ENCODE measurements at regions of chr17 and their contacts with region 1.

Region 1: GRCh38 chr17:28644985-28645939 is at the start of gene BLTP2:
- DNase-seq: peak; percentile 97 to 99
- ATAC-seq: peak; percentile 94 to 97
- H3K4me3 ChIP-seq: peak within 1 kb of the TSS; percentile 94
- H3K27ac ChIP-seq: peak within 1 kb of the TSS; percentile 97 to 99
- H3K4me1 ChIP-seq: peaks cover 32% of the 10 kb centered on the region
- CTCF ChIP-seq: no peak
- EP300 ChIP-seq: no peak
- POLR2A ChIP-seq: peak; percentile 82
- RAD21 ChIP-seq: no peak
- polyA plus RNA-seq, gene BLTP2: 150 and 243 TPM in 2 replicates

Region 2: DNA sequence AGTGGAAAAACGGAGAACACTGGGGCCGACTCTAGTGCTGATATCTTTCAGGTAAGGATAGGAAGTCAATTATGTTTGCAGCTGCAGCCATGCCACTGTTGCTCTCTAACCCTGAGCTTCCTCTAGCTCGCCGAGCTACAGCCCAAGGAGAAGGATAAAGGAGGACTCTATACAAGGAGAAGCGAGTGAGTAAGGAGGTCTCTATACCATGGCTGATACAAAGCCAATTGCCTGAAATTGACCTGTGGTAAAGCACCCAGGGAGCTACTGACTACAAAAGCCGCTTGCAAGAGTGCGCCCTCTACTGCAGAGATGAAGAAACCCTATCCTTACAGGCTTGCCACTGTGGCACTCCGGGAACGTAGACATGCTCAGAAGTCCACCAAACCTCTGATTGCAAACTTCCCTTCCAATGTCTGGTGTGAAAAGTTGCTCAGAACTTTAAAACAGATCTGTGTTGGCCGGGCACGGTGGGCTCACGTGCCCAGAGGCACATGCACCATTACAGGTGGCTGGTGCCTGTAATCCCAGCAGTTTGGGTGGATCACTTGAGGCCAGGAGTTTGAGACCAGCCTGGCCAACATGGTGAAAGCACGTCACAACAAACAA is 228.5 kb before region 1 on chr17:
- CTCF ChIA-PET with region 1: no interaction called
- POLR2A ChIA-PET with region 1: no interaction called
- DNase-seq: peak; percentile 73 to 80
- ATAC-seq: peak; percentile 92 to 99
- H3K4me3 ChIP-seq: no peak overlapping the region
- H3K27ac ChIP-seq: no peak overlapping the region
- H3K4me1 ChIP-seq: no peaks in the 10 kb centered on the region
- CTCF ChIP-seq: peak; percentile 84
- EP300 ChIP-seq: no peak
- POLR2A ChIP-seq: no peak
- RAD21 ChIP-seq: peak; percentile 68

Region 3: GRCh38 chr17:28612936-28613872 is 32.1 kb before region 1 on chr17:
- CTCF ChIA-PET with region 1: interaction called, 12 read pairs
- POLR2A ChIA-PET with region 1: interaction called, 7 read pairs
- DNase-seq: peak; percentile 39 to 56
- ATAC-seq: peak; percentile 56 to 79; a peak in 3 of 6 replicates
- H3K4me3 ChIP-seq: no peak overlapping the region
- H3K27ac ChIP-seq: no peak overlapping the region
- H3K4me1 ChIP-seq: no peaks in the 10 kb centered on the region
- CTCF ChIP-seq: peak; percentile 67
- EP300 ChIP-seq: no peak
- POLR2A ChIP-seq: no peak
- RAD21 ChIP-seq: peak; percentile 47 to 58; a peak in 4 of 5 replicates

Region 4: GRCh38 chr17:28661635-28662537 is 16.6 kb after region 1 on chr17 and contains the starts of genes SDF2 and SUPT6H:
- CTCF ChIA-PET with region 1: interaction called, 81 read pairs
- POLR2A ChIA-PET with region 1: interaction called, 41 read pairs
- DNase-seq: peak; percentile 92 to 97
- ATAC-seq: peak; percentile 92 to 97
- H3K4me3 ChIP-seq: peak within 1 kb of the TSS; percentile 74
- H3K27ac ChIP-seq: peak within 1 kb of the TSS; percentile 94 to 96
- H3K4me1 ChIP-seq: peaks cover 31% of the 10 kb centered on the region
- CTCF ChIP-seq: no peak
- EP300 ChIP-seq: no peak
- POLR2A ChIP-seq: peak; percentile 90
- RAD21 ChIP-seq: no peak
- polyA plus RNA-seq, gene SDF2: 87.9 and 113 TPM in 2 replicates
- polyA plus RNA-seq, gene SUPT6H: 51.4 and 61.0 TPM in 2 replicates

Region 5: GRCh38 chr17:28675980-28676379 is 30.7 kb after region 1 on chr17:
- CTCF ChIA-PET with region 1: interaction called, 29 read pairs
- POLR2A ChIA-PET with region 1: interaction called, 4 read pairs
- DNase-seq: peak; percentile 42 to 62
- ATAC-seq: peak; percentile 81 to 82; a peak in 5 of 6 replicates
- H3K4me3 ChIP-seq: no peak overlapping the region
- H3K27ac ChIP-seq: no peak overlapping the region
- H3K4me1 ChIP-seq: no peaks in the 10 kb centered on the region
- CTCF ChIP-seq: peak; percentile 45
- EP300 ChIP-seq: no peak
- POLR2A ChIP-seq: no peak
- RAD21 ChIP-seq: peak; percentile 44 to 66; a peak in 4 of 5 replicates

Region 6: DNA sequence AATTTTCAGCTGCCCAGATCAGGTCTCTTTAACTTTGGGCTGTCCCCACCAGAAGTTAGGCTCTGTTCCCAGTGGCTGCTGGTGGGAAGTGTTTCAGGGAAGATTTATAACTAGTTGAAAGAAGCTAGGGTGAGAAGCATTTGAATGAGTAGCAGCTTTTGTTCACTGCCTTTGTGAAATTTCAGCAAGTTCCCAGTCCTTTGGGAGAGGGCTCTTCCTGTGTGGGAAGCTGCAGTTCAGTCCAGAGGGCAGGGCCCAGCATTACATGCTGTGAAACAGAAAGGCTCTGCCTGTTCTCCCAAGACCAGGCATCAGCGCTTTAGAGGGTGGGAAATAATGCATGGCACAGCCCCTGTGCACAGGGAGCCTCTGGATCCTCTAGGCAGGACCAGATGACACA is 48.6 kb after region 1 on chr17:
- CTCF ChIA-PET with region 1: interaction called, 32 read pairs
- POLR2A ChIA-PET with region 1: no interaction called
- DNase-seq: no peak
- ATAC-seq: no peak
- H3K4me3 ChIP-seq: no peak overlapping the region
- H3K27ac ChIP-seq: no peak overlapping the region
- H3K4me1 ChIP-seq: peaks cover 27% of the 10 kb centered on the region
- CTCF ChIP-seq: no peak
- EP300 ChIP-seq: no peak
- POLR2A ChIP-seq: no peak
- RAD21 ChIP-seq: no peak

Region 7: DNA sequence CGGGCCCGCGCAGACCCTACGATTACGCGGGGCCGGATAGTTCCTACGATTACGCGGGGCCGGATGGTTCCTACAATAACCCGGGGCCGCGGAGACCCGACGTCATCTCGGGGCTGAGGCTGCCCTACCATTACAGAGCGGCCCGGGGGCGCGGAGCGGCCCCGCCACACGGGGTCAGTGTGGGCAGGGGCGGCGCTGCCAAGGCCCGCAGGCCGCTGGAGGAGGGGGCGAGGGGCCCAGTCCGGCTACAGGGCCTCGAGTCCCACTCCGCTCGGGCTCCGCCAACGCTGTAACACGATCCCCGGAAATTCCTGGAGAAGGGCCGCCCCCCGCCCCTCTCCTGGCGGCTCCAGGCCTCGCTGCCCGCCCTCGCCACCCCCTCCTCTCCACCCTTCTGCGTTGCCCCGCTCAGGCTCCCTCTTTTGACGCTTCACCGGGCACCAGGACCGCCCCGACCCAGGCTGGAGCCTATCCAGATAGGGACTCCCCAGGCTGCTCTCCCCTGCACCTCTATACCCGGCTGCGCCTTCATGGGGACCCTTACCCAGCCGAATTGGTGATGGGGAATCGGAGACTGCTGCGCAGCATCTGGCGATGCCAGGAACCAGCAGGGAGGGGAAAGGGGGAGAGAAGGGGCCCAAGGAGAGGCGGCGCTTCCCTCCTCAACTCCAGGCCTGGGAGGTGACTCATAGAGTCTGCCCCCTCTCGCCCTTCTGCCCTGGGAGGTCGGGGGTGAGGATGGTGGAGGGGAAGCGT is 72.5 kb after region 1 on chr17 and contains the start of gene RAB34:
- CTCF ChIA-PET with region 1: interaction called, 65 read pairs
- POLR2A ChIA-PET with region 1: interaction called, 19 read pairs
- DNase-seq: peak; percentile 73 to 90
- ATAC-seq: peak; percentile 67 to 69
- H3K4me3 ChIP-seq: peak within 1 kb of the TSS; percentile 77
- H3K27ac ChIP-seq: peak within 1 kb of the TSS; percentile 96
- H3K4me1 ChIP-seq: peaks cover 37% of the 10 kb centered on the region
- CTCF ChIP-seq: peak; percentile 55
- EP300 ChIP-seq: no peak
- POLR2A ChIP-seq: peak; percentile 48
- RAD21 ChIP-seq: no peak
- polyA plus RNA-seq, gene RAB34: 288 and 328 TPM in 2 replicates